ENCODE measurements at regions of chr15 and their contacts with region 1.

Region 1: DNA sequence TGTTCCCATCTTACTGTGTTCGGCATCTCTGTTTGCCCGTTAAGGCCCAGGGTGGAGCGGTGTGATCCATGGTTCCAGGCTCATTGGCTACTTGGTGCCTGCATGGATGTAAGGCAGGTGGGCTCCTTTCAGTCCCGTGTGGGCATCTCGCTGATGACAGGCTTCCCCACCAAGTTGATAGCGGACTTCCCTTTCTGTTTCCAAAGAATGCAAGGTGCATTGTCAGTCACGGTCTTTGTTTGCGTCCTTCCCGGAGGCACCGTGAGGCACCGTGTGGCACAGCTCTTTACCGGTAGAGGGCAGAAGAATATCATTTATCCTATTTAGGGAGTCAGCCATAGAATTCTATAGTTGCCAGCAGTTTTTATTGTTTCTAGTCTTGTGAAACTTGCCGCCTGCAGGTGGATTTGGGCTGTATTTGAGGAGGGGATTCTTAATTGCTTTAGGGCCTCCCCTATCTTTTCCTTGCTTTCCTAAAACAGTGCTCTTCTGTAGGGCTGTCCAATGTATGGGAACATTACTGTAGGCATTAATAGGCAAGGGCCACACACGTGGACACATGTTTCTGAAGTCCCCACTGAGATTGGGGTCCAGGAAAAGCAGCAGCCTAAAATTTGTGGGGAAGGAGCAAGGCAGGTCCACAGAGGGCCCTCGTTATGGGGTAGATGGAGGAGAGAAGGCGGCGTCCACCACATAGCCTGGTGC is 244.1 kb downstream of the SLCO3A1 start:
- DNase-seq: peak in 1 of 3 donors; percentile 41
- ATAC-seq: peak; percentile 88 to 94 (median 92)
- H3K4me3 ChIP-seq: no peak overlapping the region
- H3K27ac ChIP-seq: no peak overlapping the region
- H3K4me1 ChIP-seq: no peaks in the 10 kb centered on the region
- H3K27me3 ChIP-seq: no peaks in the 10 kb centered on the region
- CTCF ChIP-seq: peak; percentile 70 to 83 (median 79)
- POLR2A ChIP-seq: no peak

Region 2: GRCh38 chr15:92226014-92226612 is 128.5 kb after region 1 on chr15:
- intact Hi-C with region 1: loop called (anchors 5 to 10 kb)
- DNase-seq: no peak
- ATAC-seq: peak; percentile 84 to 91 (median 88)
- H3K4me3 ChIP-seq: no peak overlapping the region
- H3K27ac ChIP-seq: no peak overlapping the region
- H3K4me1 ChIP-seq: no peaks in the 10 kb centered on the region
- H3K27me3 ChIP-seq: no peaks in the 10 kb centered on the region
- CTCF ChIP-seq: peak; percentile 55 to 72 (median 58)
- POLR2A ChIP-seq: no peak

Region 3: GRCh38 chr15:92322566-92323355 is 225.1 kb after region 1 on chr15:
- intact Hi-C with region 1: no loop called
- DNase-seq: no peak
- ATAC-seq: no peak
- H3K4me3 ChIP-seq: no peak overlapping the region
- H3K27ac ChIP-seq: no peak overlapping the region
- H3K4me1 ChIP-seq: no peaks in the 10 kb centered on the region
- H3K27me3 ChIP-seq: no peaks in the 10 kb centered on the region
- CTCF ChIP-seq: no peak
- POLR2A ChIP-seq: no peak